ENCODE measurements at regions of chr2 and their contacts with region 1.

Region 1: GRCh38 chr2:47386551-47386950 is 16.4 kb upstream of the MSH2 start:
- DNase-seq: no peak
- H3K4me3 ChIP-seq: no peak overlapping the region
- H3K27ac ChIP-seq: no peak overlapping the region
- H3K4me1 ChIP-seq: no peaks in the 10 kb centered on the region; a peak in 1 of 4 replicates
- H3K27me3 ChIP-seq: no peaks in the 10 kb centered on the region
- CTCF ChIP-seq: no peak
- EP300 ChIP-seq: no peak
- RAD21 ChIP-seq: no peak

Region 2: GRCh38 chr2:47334356-47335136 is 52.0 kb before region 1 on chr2:
- CTCF ChIA-PET with region 1: interaction called, 133 read pairs
- POLR2A ChIA-PET with region 1: interaction called, 12 read pairs
- DNase-seq: no peak
- H3K4me3 ChIP-seq: no peak overlapping the region
- H3K27ac ChIP-seq: no peak overlapping the region
- H3K4me1 ChIP-seq: peaks cover 0 to 7% of the 10 kb centered on the region in 2 experiments; a peak in 1 of 4 replicates
- H3K27me3 ChIP-seq: no peaks in the 10 kb centered on the region
- CTCF ChIP-seq: no peak
- EP300 ChIP-seq: no peak
- RAD21 ChIP-seq: no peak

Region 3: GRCh38 chr2:47339745-47340541 is 46.6 kb before region 1 on chr2:
- CTCF ChIA-PET with region 1: interaction called, 133 read pairs
- POLR2A ChIA-PET with region 1: interaction called, 12 read pairs
- DNase-seq: no peak
- H3K4me3 ChIP-seq: no peak overlapping the region
- H3K27ac ChIP-seq: no peak overlapping the region; a peak in 1 of 4 replicates
- H3K4me1 ChIP-seq: peaks cover 0 to 18% of the 10 kb centered on the region in 2 experiments; a peak in 2 of 4 replicates
- H3K27me3 ChIP-seq: no peaks in the 10 kb centered on the region
- CTCF ChIP-seq: no peak
- EP300 ChIP-seq: no peak
- RAD21 ChIP-seq: no peak

Region 4: GRCh38 chr2:47344890-47345589 is 41.5 kb before region 1 on chr2:
- CTCF ChIA-PET with region 1: interaction called, 133 read pairs
- POLR2A ChIA-PET with region 1: interaction called, 12 read pairs
- DNase-seq: peak; percentile 95
- H3K4me3 ChIP-seq: peak overlapping the region; percentile 58 to 69
- H3K27ac ChIP-seq: peak overlapping the region; percentile 93 to 99
- H3K4me1 ChIP-seq: peaks cover 5 to 21% of the 10 kb centered on the region in 2 experiments; a peak in 3 of 4 replicates
- H3K27me3 ChIP-seq: no peaks in the 10 kb centered on the region
- CTCF ChIP-seq: peak; percentile 36; the same call in 1 of the 2 replicates
- EP300 ChIP-seq: peak in 1 of 2 experiments; percentile 73; a peak in 2 of 4 replicates
- RAD21 ChIP-seq: no peak

Region 5: GRCh38 chr2:47373747-47374146 is 12.8 kb before region 1 on chr2:
- CTCF ChIA-PET with region 1: interaction called, 21 read pairs
- POLR2A ChIA-PET with region 1: no interaction called
- DNase-seq: peak; percentile 71
- H3K4me3 ChIP-seq: no peak overlapping the region
- H3K27ac ChIP-seq: no peak overlapping the region
- H3K4me1 ChIP-seq: peaks cover 0 to 4% of the 10 kb centered on the region in 2 experiments; a peak in 1 of 4 replicates
- H3K27me3 ChIP-seq: peaks cover 1% of the 10 kb centered on the region; the same call in 1 of the 2 replicates
- CTCF ChIP-seq: peak; percentile 49
- EP300 ChIP-seq: no peak
- RAD21 ChIP-seq: peak; percentile 77

Region 6: GRCh38 chr2:47402805-47403608 is 16.5 kb after region 1 on chr2 and contains the start of gene MSH2:
- CTCF ChIA-PET with region 1: interaction called, 33 read pairs
- POLR2A ChIA-PET with region 1: interaction called, 9 read pairs
- DNase-seq: peak; percentile 100
- H3K4me3 ChIP-seq: peak within 1 kb of the TSS; percentile 74 to 96
- H3K27ac ChIP-seq: peak within 1 kb of the TSS; percentile 50 to 74
- H3K4me1 ChIP-seq: peaks cover 6 to 11% of the 10 kb centered on the region in 2 experiments; a peak in 1 of 4 replicates
- H3K27me3 ChIP-seq: no peaks in the 10 kb centered on the region
- CTCF ChIP-seq: 0 out of 2 replicates have a peak, but pooled peaks have one; percentile 8
- EP300 ChIP-seq: no peak; a peak in 1 of 4 replicates
- RAD21 ChIP-seq: no peak; the same call in 1 of the 2 replicates
- polyA plus RNA-seq, gene MSH2: 13.7 and 16.4 TPM in 2 replicates

Region 7: DNA sequence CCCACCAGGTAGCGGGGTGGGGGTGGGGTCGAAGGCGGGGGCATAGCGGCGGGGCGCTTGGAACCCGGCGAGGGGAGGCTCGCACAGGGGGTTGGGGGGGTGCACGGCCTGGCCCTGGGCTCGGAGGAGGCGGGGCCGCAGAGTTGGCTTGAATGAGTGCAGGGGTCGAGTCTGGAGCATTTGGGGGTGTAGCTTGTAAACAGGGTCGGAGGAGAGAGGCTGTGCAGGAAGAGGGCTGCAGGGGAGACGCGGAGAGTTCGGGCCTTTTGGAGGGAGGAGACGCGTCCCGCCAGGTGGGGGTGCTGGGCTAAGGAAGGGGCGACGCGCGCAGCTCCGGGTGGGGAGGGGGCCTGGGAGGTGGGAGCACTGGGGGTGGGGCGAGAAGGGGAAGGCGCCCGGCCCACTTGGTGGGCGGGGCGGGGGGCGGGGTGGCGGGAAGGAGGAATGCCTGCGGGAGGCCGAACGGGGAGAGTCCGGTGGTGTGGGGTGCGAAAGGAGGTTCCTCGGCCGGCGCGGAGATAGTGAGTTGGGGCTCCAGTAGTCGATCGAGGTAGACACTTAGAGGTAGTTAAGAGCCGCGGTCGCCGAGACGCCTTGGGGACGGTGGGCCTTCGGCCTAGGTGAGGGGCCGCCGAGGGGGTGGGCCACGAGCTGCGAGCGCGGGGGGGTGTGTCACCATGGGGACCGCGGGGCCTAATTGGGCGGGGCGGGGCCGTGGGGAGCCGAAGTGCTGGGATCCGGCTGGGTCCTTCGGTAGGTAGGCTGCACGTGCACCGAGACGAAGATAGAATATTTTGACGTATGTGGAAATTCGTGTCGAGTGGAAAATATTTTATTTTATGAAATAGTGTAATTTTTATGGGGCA is 397.2 kb after region 1 on chr2:
- CTCF ChIA-PET with region 1: no interaction called
- POLR2A ChIA-PET with region 1: no interaction called
- DNase-seq: peak; percentile 98
- H3K4me3 ChIP-seq: peak overlapping the region; percentile 65 to 95
- H3K27ac ChIP-seq: peak overlapping the region; percentile 89 to 94
- H3K4me1 ChIP-seq: peaks cover 2 to 13% of the 10 kb centered on the region in 2 experiments; a peak in 3 of 4 replicates
- H3K27me3 ChIP-seq: no peaks in the 10 kb centered on the region
- CTCF ChIP-seq: no peak
- EP300 ChIP-seq: no peak
- RAD21 ChIP-seq: no peak

Measured in SK-N-SH (cell line).